Ovary (tissue), 10 donors: ENCODE measurements at regions of chr10 and their contacts with region 1.

Region 1: GRCh38 chr10:132307823-132308587 is at the start of gene STK32C:
- DNase-seq: peak; percentile 89 to 94 (median 92)
- H3K4me3 ChIP-seq: peak within 1 kb of the TSS; percentile 90
- H3K27ac ChIP-seq: peak within 1 kb of the TSS; percentile 2 to 64
- H3K4me1 ChIP-seq: peaks cover 4% of the 10 kb centered on the region
- H3K27me3 ChIP-seq: no peaks in the 10 kb centered on the region
- CTCF ChIP-seq: no peak
- EP300 ChIP-seq: no peak
- POLR2A ChIP-seq: no peak
- total RNA-seq, gene STK32C: 5.4 to 13.8 (median 9.5) TPM

Region 2: GRCh38 chr10:132331526-132332432 is 23.8 kb after region 1 on chr10 and contains the start of gene LRRC27:
- intact Hi-C with region 1: loop called in 1 of 4 experiments (anchors 2 kb)
- DNase-seq: peak; percentile 99 to 100 (median 100)
- H3K4me3 ChIP-seq: peak within 1 kb of the TSS; percentile 60
- H3K27ac ChIP-seq: peak within 1 kb of the TSS; percentile 71 to 79
- H3K4me1 ChIP-seq: peaks cover 12% of the 10 kb centered on the region
- H3K27me3 ChIP-seq: no peaks in the 10 kb centered on the region
- CTCF ChIP-seq: no peak
- EP300 ChIP-seq: no peak
- POLR2A ChIP-seq: no peak
- total RNA-seq, gene LRRC27: 7.4 to 12.3 (median 9.3) TPM